B cell (primary cell): ENCODE measurements at regions of chr5 and their contacts with region 1.

Region 1: GRCh38 chr5:135565725-135566421 is 12.9 kb downstream of the CXCL14 start:
- DNase-seq: peak; percentile 53
- ATAC-seq: no peak
- H3K4me3 ChIP-seq: no peak overlapping the region
- H3K4me3 Mint-ChIP-seq: no peak overlapping the region
- H3K27ac ChIP-seq: no peak overlapping the region
- H3K27ac Mint-ChIP-seq: no peak overlapping the region
- H3K4me1 ChIP-seq: no peaks in the 10 kb centered on the region
- H3K4me1 Mint-ChIP-seq: peaks cover under 1% of the 10 kb centered on the region
- H3K27me3 ChIP-seq: peaks cover 0 to 6% (median 0%) of the 10 kb centered on the region in 4 experiments
- H3K27me3 Mint-ChIP-seq: peaks cover 13% of the 10 kb centered on the region
- CTCF ChIP-seq: peak; percentile 76

Region 2: DNA sequence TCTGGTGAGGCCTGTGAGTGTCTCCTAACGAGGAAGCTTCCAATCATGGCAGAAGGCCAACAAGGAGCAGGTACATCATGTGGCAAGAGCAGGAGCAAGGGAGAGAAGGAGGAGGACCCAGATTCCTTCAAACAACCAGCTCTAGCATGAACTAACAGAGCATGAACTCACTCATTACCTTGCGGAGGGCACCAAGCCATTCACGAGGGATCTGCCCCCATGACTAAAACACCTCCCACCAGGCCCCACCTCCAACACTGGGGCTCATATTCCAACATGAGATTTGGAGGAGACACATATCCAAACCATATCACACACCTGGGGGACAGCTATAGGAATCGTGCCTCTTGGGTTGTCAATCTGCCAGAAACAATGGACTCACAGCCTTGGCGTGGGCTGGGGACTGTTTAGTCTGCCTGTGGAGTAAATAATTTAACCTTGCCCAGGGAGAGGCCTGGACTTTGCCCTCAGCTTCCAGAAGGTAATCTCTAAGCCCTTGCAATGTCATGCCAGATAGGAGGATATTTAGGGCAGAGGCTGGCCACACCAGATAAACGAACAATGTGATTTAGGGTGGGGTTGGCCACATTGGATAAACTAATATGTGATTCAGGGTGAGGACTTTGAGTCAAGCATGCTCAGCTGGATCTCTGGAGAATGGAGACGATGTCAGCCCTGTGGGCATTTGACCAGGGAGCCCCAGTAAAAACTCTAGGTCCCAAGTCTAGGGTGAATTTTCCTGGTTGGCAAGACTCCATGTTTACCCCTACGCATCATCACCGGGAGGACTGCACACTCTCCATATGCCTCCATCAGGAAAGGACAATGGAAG is 1547.5 kb before region 1 on chr5:
- CTCF ChIA-PET with region 1: no interaction called
- POLR2A ChIA-PET with region 1: no interaction called
- intact Hi-C with region 1: no loop called
- DNase-seq: no peak
- ATAC-seq: no peak
- H3K4me3 ChIP-seq: no peak overlapping the region
- H3K4me3 Mint-ChIP-seq: no peak overlapping the region
- H3K27ac ChIP-seq: no peak overlapping the region
- H3K27ac Mint-ChIP-seq: no peak overlapping the region
- H3K4me1 ChIP-seq: no peaks in the 10 kb centered on the region
- H3K4me1 Mint-ChIP-seq: no peaks in the 10 kb centered on the region
- H3K27me3 ChIP-seq: no peaks in the 10 kb centered on the region
- H3K27me3 Mint-ChIP-seq: peaks cover under 1% of the 10 kb centered on the region
- CTCF ChIP-seq: no peak

Region 3: GRCh38 chr5:135466178-135467050 is 99.5 kb before region 1 on chr5:
- CTCF ChIA-PET with region 1: interaction called, 67 read pairs
- POLR2A ChIA-PET with region 1: no interaction called
- intact Hi-C with region 1: loop called (anchors 1 kb)
- DNase-seq: peak; percentile 62
- ATAC-seq: peak; percentile 54
- H3K4me3 ChIP-seq: peak overlapping the region in 2 of 5 experiments; percentile 18 to 30
- H3K4me3 Mint-ChIP-seq: peak overlapping the region; percentile 62
- H3K27ac ChIP-seq: no peak overlapping the region
- H3K27ac Mint-ChIP-seq: no peak overlapping the region
- H3K4me1 ChIP-seq: peaks cover 9% of the 10 kb centered on the region in 2 donors
- H3K4me1 Mint-ChIP-seq: peaks cover 13% of the 10 kb centered on the region
- H3K27me3 ChIP-seq: peaks cover 0 to 32% (median 8%) of the 10 kb centered on the region in 4 experiments
- H3K27me3 Mint-ChIP-seq: peaks cover 58% of the 10 kb centered on the region
- CTCF ChIP-seq: peak; percentile 64